ENCODE measurements at regions of chr7 and their contacts with region 1.

Region 1: DNA sequence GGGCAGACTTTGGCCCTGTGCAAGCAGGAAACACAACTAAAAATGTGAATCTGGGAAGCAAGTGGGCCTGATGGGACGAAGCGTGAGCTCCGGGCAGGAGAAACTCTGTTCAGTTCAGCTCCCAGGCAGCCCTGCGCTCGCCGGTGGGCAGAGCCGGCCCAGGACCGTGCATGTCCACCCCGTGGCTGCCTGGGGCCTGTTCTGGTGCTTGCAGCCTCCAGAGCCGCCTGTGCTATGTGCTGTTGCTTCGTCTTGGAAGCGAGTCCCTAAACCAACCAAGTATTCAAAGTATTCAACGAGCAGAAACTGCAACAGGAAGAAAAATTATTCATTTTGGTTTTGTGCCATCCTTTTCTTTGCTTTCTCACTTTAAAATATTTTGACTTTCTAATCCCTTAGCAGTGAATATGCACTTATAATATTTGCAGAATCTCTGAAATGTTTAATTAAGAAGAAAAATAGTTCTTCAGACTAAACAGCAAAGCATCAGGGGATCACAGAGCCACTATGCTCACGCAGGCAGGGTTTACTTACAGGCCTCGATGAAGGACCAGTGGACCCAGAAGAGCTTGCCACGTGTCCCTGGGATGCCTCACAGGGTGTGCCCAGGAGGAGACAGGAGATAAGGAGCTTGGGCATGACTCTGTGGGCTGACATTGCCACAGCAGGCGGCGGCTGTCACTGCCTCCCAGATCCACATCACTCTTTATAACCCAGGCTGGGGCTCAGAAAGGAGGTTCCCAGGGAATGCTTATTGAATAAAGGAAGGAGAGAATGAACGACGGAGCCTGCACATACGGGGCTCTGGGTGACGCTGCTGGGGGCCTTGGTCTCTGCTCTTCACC is 45.6 kb downstream of the VIPR2 start:
- DNase-seq: peak in 1 of 2 donors; percentile 36
- ATAC-seq: no peak
- H3K4me3 ChIP-seq: no peak overlapping the region
- H3K27ac ChIP-seq: peak overlapping the region; percentile 93 to 98 (median 96)
- H3K4me1 ChIP-seq: peaks cover 46 to 58% of the 10 kb centered on the region in 2 donors
- H3K27me3 ChIP-seq: no peaks in the 10 kb centered on the region
- CTCF ChIP-seq: no peak
- POLR2A ChIP-seq: no peak

Region 2: GRCh38 chr7:159015454-159016410 is 83.3 kb before region 1 on chr7:
- in situ Hi-C with region 1: no loop called
- intact Hi-C with region 1: loop called (anchors 5 kb)
- DNase-seq: peak; percentile 33 to 72
- ATAC-seq: peak; percentile 61 to 69
- H3K4me3 ChIP-seq: no peak overlapping the region
- H3K27ac ChIP-seq: peak overlapping the region; percentile 49 to 81 (median 71)
- H3K4me1 ChIP-seq: peaks cover 21 to 28% of the 10 kb centered on the region in 2 donors
- H3K27me3 ChIP-seq: no peaks in the 10 kb centered on the region
- CTCF ChIP-seq: no peak
- POLR2A ChIP-seq: no peak

Region 3: DNA sequence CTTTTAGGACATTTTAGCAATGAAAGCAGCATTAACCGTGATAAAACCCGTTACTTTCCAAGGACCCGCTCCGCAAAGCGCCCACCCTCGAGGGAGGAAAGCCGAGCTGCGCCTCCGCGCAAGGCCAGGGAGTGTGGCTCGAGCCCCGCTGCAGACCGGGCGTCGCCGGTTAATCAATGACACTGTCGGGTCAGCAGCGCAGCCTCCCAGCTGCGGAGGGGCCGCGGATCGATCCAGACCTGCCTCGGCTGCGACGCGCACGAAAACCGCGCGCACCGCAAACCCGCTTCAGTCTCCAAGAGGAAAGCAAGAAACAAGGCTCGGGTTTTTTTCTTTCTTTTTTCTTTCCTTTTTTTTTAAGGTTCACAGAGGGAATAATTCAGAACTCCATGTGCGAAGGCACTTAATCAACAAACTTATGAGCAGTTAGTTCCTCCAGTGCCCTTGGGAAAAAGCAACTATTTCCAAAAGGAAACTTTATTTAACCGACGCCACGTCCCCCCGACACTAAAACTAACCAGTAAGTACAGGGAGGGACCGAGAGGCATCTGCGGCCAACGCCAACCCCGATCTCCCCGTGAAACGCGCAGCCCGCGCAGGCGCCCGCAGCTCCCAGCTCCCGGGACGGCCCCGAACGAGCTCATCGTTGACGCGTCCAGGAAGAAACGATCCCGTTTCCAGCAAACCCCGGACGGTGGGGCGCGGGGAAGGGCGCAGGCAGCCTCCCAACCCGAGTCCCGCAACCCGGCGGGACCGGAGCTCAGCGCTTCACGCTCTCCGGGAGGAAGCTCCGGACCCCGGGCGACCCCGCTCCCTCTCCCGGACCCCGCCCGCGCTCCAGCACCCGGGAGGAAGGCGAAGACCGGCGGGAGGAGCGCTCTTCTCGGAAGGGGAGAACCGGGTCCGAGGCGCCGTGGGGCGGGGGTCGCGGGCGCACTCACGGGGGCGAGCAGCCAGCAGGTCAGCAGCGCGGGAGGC is 45.0 kb after region 1 on chr7:
- in situ Hi-C with region 1: no loop called
- intact Hi-C with region 1: loop called (anchors 2 kb)
- DNase-seq: no peak
- ATAC-seq: peak in 1 of 2 donors; percentile 35
- H3K4me3 ChIP-seq: peak overlapping the region; percentile 63 to 79 (median 65)
- H3K27ac ChIP-seq: no peak overlapping the region
- H3K4me1 ChIP-seq: peaks cover 10 to 11% of the 10 kb centered on the region in 2 donors
- H3K27me3 ChIP-seq: peaks cover 0 to 16% (median 7%) of the 10 kb centered on the region in 3 donors
- CTCF ChIP-seq: no peak
- POLR2A ChIP-seq: no peak

Measured in gastrocnemius medialis (tissue), 4 donors.